ENCODE measurements at regions of chr5 and their contacts with region 1.

Region 1: DNA sequence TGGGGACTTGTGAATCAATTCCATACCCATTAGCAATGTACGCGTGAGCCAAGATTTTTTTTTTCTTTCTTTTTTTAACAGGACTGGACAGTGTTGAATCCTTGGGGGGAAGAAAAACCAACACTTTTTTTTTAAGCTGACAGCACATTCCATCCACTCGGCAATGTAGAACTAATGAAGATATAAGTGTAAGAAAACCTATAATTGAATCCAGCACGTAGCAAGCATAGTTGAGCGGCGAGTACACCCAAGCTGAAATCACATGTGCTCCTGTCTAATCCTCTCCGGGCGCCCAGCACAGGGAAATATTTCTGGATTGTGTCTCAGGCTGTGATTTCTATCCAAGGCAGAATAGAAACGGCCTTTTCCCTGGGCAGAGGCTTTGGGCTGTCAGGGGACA is 118.2 kb downstream of the BOD1 start:
- DNase-seq: peak; percentile 22 to 70
- ATAC-seq: peak; percentile 56 to 80 (median 74)
- H3K4me3 ChIP-seq: peak overlapping the region; percentile 33
- H3K27ac ChIP-seq: peak overlapping the region; percentile 87
- H3K4me1 ChIP-seq: peaks cover 59% of the 10 kb centered on the region
- H3K27me3 ChIP-seq: no peaks in the 10 kb centered on the region
- CTCF ChIP-seq: no peak

Region 2: DNA sequence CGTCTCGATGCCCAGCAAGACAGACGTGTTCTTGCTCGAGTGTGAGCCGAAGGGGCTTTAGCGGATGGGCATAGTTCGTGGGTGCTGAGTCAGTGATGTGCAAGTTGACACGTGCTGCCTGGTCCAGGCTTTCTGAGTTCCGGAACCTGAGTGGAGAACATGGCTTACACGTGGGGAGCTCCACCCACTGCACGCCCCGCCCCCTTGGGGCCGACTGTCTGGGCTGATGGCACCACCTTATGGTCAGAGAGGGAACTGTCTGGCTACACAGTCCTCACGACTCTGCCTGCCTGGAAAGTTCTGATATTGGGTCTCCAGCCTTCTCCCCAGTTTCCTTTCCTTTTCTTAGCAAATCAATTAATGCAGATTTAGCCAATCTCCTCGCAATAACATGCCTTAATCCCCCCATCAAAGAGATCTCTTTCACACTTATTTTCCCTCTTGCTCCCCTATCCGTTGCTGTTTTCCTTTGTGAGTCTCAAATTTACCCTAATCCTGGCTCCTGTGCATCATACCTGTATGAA is 166.3 kb before region 1 on chr5:
- intact Hi-C with region 1: loop called in 1 of 2 experiments (anchors 5 kb)
- DNase-seq: peak; percentile 84 to 91
- ATAC-seq: peak; percentile 47 to 75 (median 70)
- H3K4me3 ChIP-seq: no peak overlapping the region
- H3K27ac ChIP-seq: no peak overlapping the region
- H3K4me1 ChIP-seq: peaks cover 21% of the 10 kb centered on the region
- H3K27me3 ChIP-seq: peaks cover 0 to 5% (median 0%) of the 10 kb centered on the region in 3 donors
- CTCF ChIP-seq: peak; percentile 73

Region 3: DNA sequence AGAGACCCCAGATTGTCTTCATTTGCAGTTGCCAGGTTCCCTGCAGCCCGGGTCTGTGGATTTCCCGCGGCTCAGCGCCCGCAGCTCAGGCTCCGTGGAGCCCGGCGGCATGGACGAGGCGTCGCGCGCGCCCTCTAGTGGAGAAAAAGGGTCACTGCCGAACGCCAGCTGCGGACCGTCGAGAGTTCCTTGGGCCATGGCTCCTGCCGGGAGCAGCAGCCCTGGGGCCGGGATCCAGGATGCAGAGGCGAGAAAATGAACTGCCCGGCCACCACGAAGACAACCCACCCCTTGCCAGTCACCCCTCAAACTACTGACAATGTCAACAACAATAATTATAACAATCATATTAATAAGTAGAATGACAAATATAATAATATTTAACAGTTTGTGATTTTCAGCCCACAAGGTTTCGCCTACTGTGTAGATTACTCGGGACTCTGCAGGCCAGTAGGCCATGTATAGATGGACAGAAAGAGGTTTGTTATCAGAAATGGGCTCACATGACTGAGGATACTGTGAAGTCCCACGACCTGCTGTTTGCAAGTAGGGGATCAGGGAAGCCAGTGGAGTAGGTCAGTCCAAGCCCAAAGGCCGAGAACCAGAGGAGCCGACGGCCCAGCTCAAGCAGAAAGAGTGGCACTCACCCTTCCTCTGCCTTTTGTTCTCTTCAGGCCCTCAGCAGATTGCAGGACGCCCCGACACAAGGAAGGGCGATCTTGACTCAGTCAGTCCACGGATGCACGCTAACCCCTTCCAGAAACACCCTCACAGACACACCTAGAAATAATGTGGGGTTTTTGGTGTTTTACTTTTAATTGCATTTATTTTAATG is 75.1 kb after region 1 on chr5:
- intact Hi-C with region 1: loop called in 1 of 2 experiments (anchors 5 kb)
- DNase-seq: peak; percentile 73 to 90
- ATAC-seq: peak; percentile 94 to 99 (median 97)
- H3K4me3 ChIP-seq: peak overlapping the region; percentile 45
- H3K27ac ChIP-seq: no peak overlapping the region
- H3K4me1 ChIP-seq: no peaks in the 10 kb centered on the region
- H3K27me3 ChIP-seq: no peaks in the 10 kb centered on the region
- CTCF ChIP-seq: peak; percentile 96

Measured in psoas muscle (tissue), 8 donors.